ENCODE measurements at regions of chr21 and their contacts with region 1.

Region 1: DNA sequence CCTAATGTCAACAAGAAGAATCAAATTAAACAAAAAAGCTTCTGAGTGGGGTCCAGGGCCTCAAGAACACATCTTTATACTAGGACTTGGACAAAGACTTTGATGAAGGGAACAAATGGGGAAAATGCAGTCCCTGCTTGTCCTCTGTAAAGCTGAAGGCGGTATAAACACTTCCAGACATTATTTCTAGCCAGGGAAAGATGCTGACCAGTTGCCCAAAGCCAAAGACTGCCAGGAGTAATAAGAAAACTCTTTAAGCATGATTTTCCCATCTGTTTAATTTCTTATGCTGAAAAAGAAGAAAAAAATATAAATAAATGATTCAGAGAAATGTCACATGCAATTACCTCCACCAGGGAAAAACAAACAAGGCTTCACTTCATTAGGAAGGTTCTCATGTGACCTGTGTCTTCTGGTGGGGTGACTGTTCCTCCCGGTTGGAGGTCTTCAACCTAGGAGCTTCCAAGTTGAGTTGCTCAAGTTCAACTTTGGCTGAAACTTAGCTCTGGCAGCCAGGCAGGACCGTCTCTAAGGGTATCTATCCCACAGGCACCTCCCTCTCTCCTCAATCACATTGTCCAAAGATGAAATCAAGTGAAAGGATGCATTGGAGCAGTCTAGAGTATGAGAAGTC is 65.2 kb upstream of the KCNE2 start:
- DNase-seq: no peak
- H3K4me3 ChIP-seq: no peak overlapping the region
- H3K27ac ChIP-seq: no peak overlapping the region
- H3K4me1 ChIP-seq: no peaks in the 10 kb centered on the region
- H3K27me3 ChIP-seq: no peaks in the 10 kb centered on the region
- CTCF ChIP-seq: no peak
- EP300 ChIP-seq: no peak
- POLR2A ChIP-seq: no peak

Region 2: DNA sequence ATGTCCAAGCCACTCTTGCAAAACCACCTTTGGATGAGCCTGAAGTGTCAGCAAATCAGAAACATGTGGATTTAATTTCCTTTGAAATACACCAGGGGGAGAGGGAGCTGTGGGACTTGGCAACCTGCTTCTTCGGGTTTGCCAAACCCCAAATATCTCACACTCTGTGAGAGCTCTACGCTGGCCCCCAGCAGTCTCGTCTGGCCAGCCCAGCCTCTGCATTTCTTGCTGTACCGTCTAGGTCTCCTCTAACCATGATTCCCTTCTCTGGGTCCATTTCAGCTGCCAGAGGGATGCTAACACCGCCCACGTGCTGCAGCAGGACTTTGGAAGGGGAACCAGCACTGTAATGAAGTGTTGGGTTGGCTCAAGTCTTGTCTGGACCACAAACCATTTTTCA is 110.7 kb before region 1 on chr21:
- intact Hi-C with region 1: no loop called
- DNase-seq: no peak
- H3K4me3 ChIP-seq: no peak overlapping the region
- H3K27ac ChIP-seq: no peak overlapping the region
- H3K4me1 ChIP-seq: peaks cover 0 to 19% (median 10%) of the 10 kb centered on the region in 4 donors
- H3K27me3 ChIP-seq: no peaks in the 10 kb centered on the region
- CTCF ChIP-seq: no peak
- EP300 ChIP-seq: no peak
- POLR2A ChIP-seq: no peak

Region 3: DNA sequence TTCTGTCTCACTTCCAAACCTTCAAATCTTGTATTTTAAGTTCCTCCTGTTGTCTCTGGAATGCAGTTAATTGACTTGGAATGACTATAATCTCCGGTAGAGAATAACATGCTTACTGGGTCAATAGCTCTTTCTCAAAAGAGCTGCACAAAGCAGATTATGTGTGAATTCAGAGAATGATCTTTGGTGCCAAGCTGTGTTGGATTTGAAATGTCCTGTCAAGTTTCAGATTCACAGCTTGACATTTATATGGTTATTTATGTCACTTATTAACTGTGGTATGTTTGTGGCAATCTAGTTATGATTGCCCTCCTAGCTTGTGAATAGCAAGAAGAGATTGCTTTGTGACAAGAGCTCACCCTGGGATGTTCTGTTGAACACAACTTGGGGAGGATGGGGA is 63.1 kb before region 1 on chr21:
- intact Hi-C with region 1: loop called (anchors 10 kb)
- DNase-seq: no peak
- H3K4me3 ChIP-seq: no peak overlapping the region
- H3K27ac ChIP-seq: no peak overlapping the region
- H3K4me1 ChIP-seq: no peaks in the 10 kb centered on the region
- H3K27me3 ChIP-seq: no peaks in the 10 kb centered on the region
- CTCF ChIP-seq: no peak
- EP300 ChIP-seq: no peak
- POLR2A ChIP-seq: no peak